H1 (cell line): ENCODE measurements at regions of chr3 and their contacts with region 1.

Region 1: GRCh38 chr3:49899815-49900214 is 3.9 kb downstream of the MST1R start:
- DNase-seq: peak in 1 of 2 experiments; percentile 64
- H3K4me3 ChIP-seq: no peak overlapping the region
- H3K27ac ChIP-seq: no peak overlapping the region
- H3K4me1 ChIP-seq: peaks cover 0 to 9% (median 8%) of the 10 kb centered on the region in 4 experiments; a peak in 6 of 7 replicates
- H3K27me3 ChIP-seq: peaks cover 0 to 3% (median 1%) of the 10 kb centered on the region in 4 experiments; a peak in 3 of 7 replicates
- CTCF ChIP-seq: peak in 2 of 3 experiments; percentile 73; a peak in 3 of 4 replicates
- EP300 ChIP-seq: no peak
- POLR2A ChIP-seq: no peak
- RAD21 ChIP-seq: peak; percentile 74 to 84

Region 2: DNA sequence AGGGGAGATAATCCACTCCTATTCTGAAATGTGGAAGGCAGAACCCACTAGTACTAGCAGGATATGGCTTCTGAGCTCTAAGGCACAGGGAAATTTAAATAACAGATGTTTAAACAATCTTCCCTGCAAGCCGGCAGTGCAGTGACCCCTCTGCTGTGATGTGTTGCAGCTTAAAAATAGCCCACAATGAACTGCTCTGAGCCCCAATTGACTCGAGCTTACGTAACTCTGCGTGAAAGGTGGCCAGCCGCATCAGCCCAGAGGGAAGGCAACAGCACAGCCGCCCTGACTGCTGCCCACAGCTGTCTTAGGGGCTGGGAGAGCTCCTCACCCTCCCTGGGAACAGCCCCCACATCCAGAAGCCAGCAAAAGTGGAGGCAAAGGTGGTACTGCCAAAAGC is 17.6 kb before region 1 on chr3:
- CTCF ChIA-PET with region 1: interaction called, 38 read pairs
- POLR2A ChIA-PET with region 1: interaction called, 16 read pairs
- DNase-seq: no peak
- H3K4me3 ChIP-seq: no peak overlapping the region
- H3K27ac ChIP-seq: no peak overlapping the region
- H3K4me1 ChIP-seq: peaks cover 10 to 22% (median 17%) of the 10 kb centered on the region in 4 experiments
- H3K27me3 ChIP-seq: no peaks in the 10 kb centered on the region
- CTCF ChIP-seq: no peak
- EP300 ChIP-seq: no peak
- POLR2A ChIP-seq: no peak
- RAD21 ChIP-seq: no peak

Region 3: DNA sequence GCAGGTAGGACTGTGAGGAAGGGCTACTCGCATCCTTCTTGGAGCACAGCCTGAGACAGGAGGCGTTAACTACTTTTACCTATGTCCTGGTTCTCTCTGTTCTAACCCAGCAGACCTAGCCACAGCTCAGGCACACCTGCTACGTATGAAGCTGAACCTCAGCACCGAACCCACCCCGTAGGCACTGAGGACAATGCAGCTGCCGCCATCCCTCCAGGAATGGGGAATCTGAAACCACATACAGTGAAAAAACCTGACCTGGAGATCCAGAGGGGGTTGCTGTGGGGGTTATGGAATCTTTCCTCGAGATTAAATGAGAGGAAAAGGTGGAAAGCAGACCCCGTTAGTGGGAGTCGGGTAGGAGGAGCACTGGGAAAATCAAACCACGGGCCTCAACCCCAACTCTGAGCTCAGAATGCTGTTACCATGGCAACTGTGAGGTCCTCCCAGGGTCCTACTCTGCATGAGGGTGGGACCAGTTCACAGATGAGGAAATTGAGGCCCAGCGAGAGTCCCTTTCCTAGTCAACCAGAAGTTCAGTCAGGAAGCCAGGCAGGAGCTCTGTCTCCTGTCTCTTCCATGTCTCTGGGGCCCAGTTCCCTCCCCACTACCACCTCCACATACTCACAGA is 10.4 kb before region 1 on chr3:
- CTCF ChIA-PET with region 1: interaction called, 12 read pairs
- POLR2A ChIA-PET with region 1: interaction called, 16 read pairs
- DNase-seq: no peak
- H3K4me3 ChIP-seq: no peak overlapping the region
- H3K27ac ChIP-seq: no peak overlapping the region
- H3K4me1 ChIP-seq: peaks cover 0 to 2% (median 0%) of the 10 kb centered on the region in 4 experiments; a peak in 1 of 7 replicates
- H3K27me3 ChIP-seq: no peaks in the 10 kb centered on the region
- CTCF ChIP-seq: no peak
- EP300 ChIP-seq: no peak
- POLR2A ChIP-seq: no peak
- RAD21 ChIP-seq: no peak

Region 4: DNA sequence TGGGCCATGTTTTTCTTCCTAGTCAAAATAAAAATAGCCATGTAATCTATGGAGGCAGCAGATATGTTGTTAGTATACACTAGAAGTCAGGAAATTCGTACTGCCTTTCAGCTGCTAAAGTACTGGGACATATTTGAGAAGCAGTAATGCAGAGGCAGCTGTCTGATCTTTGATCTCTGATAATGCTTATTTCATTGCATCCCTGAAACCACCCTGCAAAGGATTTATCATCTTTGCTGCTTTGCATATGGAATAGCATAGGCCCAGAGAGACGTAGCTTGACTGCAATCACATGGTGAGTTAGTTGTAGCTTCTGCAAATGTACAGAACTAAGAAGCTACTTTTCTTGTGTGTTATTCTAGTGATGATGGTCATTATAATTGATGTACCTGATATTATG is 92.5 kb after region 1 on chr3:
- CTCF ChIA-PET with region 1: no interaction called
- POLR2A ChIA-PET with region 1: no interaction called
- DNase-seq: no peak
- H3K4me3 ChIP-seq: no peak overlapping the region
- H3K27ac ChIP-seq: no peak overlapping the region
- H3K4me1 ChIP-seq: peaks cover 0 to 4% (median 2%) of the 10 kb centered on the region in 4 experiments; a peak in 3 of 7 replicates
- H3K27me3 ChIP-seq: no peaks in the 10 kb centered on the region
- CTCF ChIP-seq: no peak
- EP300 ChIP-seq: no peak
- POLR2A ChIP-seq: no peak
- RAD21 ChIP-seq: no peak

Region 5: GRCh38 chr3:50138266-50139200 is 238.7 kb after region 1 on chr3:
- CTCF ChIA-PET with region 1: no interaction called
- POLR2A ChIA-PET with region 1: no interaction called
- DNase-seq: peak in 1 of 2 experiments; percentile 71
- H3K4me3 ChIP-seq: peak overlapping the region in 3 of 4 experiments; percentile 17 to 45 (median 36); a peak in 3 of 8 replicates
- H3K27ac ChIP-seq: peak overlapping the region; percentile 41; the same call in 1 of the 2 replicates
- H3K4me1 ChIP-seq: peaks cover 4 to 32% (median 28%) of the 10 kb centered on the region in 4 experiments
- H3K27me3 ChIP-seq: no peaks in the 10 kb centered on the region; a peak in 1 of 7 replicates
- CTCF ChIP-seq: no peak
- EP300 ChIP-seq: no peak
- POLR2A ChIP-seq: no peak; a peak in 1 of 3 replicates
- RAD21 ChIP-seq: no peak